Transverse colon (tissue), 4 donors: ENCODE measurements at regions of chr2 and their contacts with region 1.

Region 1: GRCh38 chr2:235106874-235107639 is 155.2 kb downstream of the SH3BP4 start:
- DNase-seq: peak; percentile 62
- H3K4me3 ChIP-seq: no peak overlapping the region
- H3K27ac ChIP-seq: no peak overlapping the region
- H3K4me1 ChIP-seq: no peaks in the 10 kb centered on the region
- H3K27me3 ChIP-seq: no peaks in the 10 kb centered on the region
- CTCF ChIP-seq: peak; percentile 54 to 67 (median 57)
- EP300 ChIP-seq: no peak
- POLR2A ChIP-seq: no peak

Region 2: GRCh38 chr2:233976690-233977294 is 1130.3 kb before region 1 on chr2:
- in situ Hi-C with region 1: loop called in 1 of 4 experiments (anchors 25 kb)
- intact Hi-C with region 1: no loop called
- DNase-seq: no peak
- H3K4me3 ChIP-seq: no peak overlapping the region
- H3K27ac ChIP-seq: no peak overlapping the region
- H3K4me1 ChIP-seq: no peaks in the 10 kb centered on the region
- H3K27me3 ChIP-seq: no peaks in the 10 kb centered on the region
- CTCF ChIP-seq: peak in 4 of 5 experiments; percentile 18 to 35 (median 26)
- EP300 ChIP-seq: no peak
- POLR2A ChIP-seq: no peak

Region 3: DNA sequence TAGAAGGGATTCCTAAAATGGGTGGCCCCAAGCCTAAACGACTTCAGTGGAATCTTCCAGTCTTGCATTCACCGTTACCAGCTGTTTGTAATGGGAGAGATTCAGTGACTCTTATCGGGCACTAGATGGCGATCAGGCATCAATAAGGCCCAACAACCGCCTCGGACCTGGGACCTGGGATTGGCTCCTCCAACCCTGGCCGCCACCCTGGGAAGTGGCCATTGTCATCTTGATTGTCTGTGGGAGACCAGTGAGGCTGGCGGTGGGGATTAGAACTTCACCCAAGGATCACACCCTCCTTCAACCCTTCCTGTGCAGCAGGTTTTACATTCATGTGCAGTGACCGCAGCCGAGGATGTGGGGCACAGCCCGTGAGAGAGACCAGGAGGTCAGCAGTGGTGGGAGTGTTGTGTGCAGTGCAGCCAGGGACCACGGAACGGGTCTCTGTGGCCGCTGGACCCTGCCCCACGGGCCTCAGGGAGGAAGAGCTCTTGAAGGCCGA is 971.3 kb before region 1 on chr2:
- in situ Hi-C with region 1: loop called in 3 of 4 experiments (anchors 10 to 25 kb)
- intact Hi-C with region 1: no loop called
- DNase-seq: peak; percentile 62
- H3K4me3 ChIP-seq: no peak overlapping the region
- H3K27ac ChIP-seq: no peak overlapping the region
- H3K4me1 ChIP-seq: no peaks in the 10 kb centered on the region
- H3K27me3 ChIP-seq: peaks cover 5% of the 10 kb centered on the region
- CTCF ChIP-seq: peak; percentile 65 to 83 (median 76)
- EP300 ChIP-seq: no peak
- POLR2A ChIP-seq: no peak

Region 4: GRCh38 chr2:234550511-234551107 is 556.4 kb before region 1 on chr2:
- in situ Hi-C with region 1: loop called in 3 of 4 experiments (anchors 5 to 10 kb)
- intact Hi-C with region 1: no loop called
- DNase-seq: peak; percentile 56
- H3K4me3 ChIP-seq: no peak overlapping the region
- H3K27ac ChIP-seq: no peak overlapping the region
- H3K4me1 ChIP-seq: no peaks in the 10 kb centered on the region
- H3K27me3 ChIP-seq: peaks cover 5% of the 10 kb centered on the region
- CTCF ChIP-seq: peak; percentile 87 to 95 (median 90)
- EP300 ChIP-seq: no peak
- POLR2A ChIP-seq: no peak